ENCODE measurements at regions of chr13 and their contacts with region 1.

Region 1: GRCh38 chr13:49652355-49653305 is 24.3 kb downstream of the ARL11 start:
- DNase-seq: no peak
- ATAC-seq: peak; percentile 77 to 85 (median 84)
- H3K4me3 ChIP-seq: no peak overlapping the region
- H3K27ac ChIP-seq: no peak overlapping the region
- H3K4me1 ChIP-seq: no peaks in the 10 kb centered on the region
- H3K27me3 ChIP-seq: no peaks in the 10 kb centered on the region
- CTCF ChIP-seq: peak; percentile 41 to 54 (median 51)
- POLR2A ChIP-seq: no peak

Region 2: GRCh38 chr13:49840266-49840665 is 187.6 kb after region 1 on chr13:
- intact Hi-C with region 1: loop called in 1 of 2 experiments (anchors 10 kb)
- DNase-seq: no peak
- ATAC-seq: no peak
- H3K4me3 ChIP-seq: no peak overlapping the region
- H3K27ac ChIP-seq: no peak overlapping the region
- H3K4me1 ChIP-seq: no peaks in the 10 kb centered on the region
- H3K27me3 ChIP-seq: no peaks in the 10 kb centered on the region
- CTCF ChIP-seq: no peak
- POLR2A ChIP-seq: no peak